ENCODE measurements at regions of chr15 and their contacts with region 1.

Region 1: DNA sequence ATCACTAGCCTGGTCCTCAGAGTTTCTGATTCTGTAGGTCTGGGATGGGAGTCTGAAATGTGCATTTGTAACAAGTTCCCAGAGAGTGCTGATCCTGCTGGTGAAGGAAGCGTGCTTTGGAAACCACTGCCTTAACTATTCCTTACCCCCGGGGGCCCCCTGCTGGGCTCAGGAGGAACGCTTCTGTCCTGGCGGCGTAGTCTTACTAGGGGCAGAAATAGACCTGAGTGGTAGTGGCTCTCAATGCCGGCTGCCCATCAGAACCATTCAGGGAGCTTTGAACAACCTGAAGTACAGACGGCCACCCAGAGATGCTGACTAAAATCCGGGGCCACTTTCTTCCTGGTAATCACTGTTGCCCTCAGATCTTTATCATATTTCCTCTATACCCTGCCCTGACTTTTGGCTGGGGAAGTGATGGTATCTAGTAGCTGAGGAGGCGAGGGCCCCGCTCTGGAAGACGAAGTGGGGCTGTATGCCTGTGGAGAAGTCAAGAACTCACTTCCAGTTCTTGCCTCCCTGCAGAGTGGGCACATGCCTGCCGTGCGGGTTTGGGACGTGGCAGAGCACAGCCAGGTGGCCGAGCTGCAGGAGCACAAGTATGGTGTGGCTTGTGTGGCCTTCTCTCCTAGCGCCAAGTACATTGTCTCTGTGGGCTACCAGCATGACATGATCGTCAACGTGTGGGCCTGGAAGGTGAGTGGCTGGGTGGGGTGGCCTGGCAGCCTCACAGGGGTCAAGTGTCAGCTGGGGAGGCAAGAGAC is 16.3 kb upstream of the JMJD7 start:
- DNase-seq: peak; percentile 80
- ATAC-seq: peak; percentile 89
- H3K4me3 Mint-ChIP-seq: no peak overlapping the region
- H3K27ac Mint-ChIP-seq: peak overlapping the region; percentile 69
- H3K4me1 Mint-ChIP-seq: peaks cover 34% of the 10 kb centered on the region
- H3K27me3 Mint-ChIP-seq: no peaks in the 10 kb centered on the region

Region 2: GRCh38 chr15:41557673-41558399 is 253.8 kb before region 1 on chr15:
- CTCF ChIA-PET with region 1: interaction called, 13 read pairs
- POLR2A ChIA-PET with region 1: no interaction called
- DNase-seq: peak; percentile 76
- ATAC-seq: peak; percentile 76
- H3K4me3 Mint-ChIP-seq: peak overlapping the region; percentile 74
- H3K27ac Mint-ChIP-seq: peak overlapping the region; percentile 65
- H3K4me1 Mint-ChIP-seq: peaks cover 22% of the 10 kb centered on the region
- H3K27me3 Mint-ChIP-seq: peaks cover 47% of the 10 kb centered on the region

Region 3: DNA sequence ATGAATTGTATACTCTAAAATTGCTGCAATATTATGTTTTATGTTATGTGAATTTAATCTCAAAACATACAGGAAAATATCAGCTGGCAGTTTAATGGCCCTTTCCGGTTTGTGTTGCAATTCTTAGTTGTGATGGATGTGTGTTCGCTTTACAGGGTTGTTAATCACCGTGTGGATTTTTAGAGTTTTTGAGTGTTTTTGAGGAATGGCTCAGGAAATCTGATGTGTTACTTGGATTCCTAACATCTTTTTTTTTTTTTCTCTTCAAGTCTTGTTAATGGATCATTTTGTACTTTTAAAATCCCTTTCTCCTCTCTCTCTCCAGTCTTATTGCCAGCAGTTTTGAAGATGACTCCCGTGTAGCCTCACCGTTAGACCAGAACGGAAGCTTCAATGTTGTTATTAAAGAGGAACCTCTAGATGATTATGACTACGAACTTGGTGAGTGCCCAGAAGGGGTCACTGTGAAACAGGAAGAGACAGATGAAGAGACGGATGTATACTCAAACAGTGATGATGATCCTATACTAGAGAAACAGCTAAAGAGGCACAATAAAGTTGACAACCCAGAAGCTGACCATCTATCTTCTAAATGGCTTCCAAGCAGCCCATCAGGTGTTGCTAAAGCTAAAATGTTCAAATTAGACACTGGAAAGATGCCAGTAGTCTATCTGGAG is 115.7 kb before region 1 on chr15:
- CTCF ChIA-PET with region 1: interaction called, 29 read pairs
- POLR2A ChIA-PET with region 1: no interaction called
- DNase-seq: peak; percentile 75
- ATAC-seq: peak; percentile 98
- H3K4me3 Mint-ChIP-seq: peak overlapping the region; percentile 4
- H3K27ac Mint-ChIP-seq: peak overlapping the region; percentile 74
- H3K4me1 Mint-ChIP-seq: peaks cover 38% of the 10 kb centered on the region
- H3K27me3 Mint-ChIP-seq: no peaks in the 10 kb centered on the region

Region 4: DNA sequence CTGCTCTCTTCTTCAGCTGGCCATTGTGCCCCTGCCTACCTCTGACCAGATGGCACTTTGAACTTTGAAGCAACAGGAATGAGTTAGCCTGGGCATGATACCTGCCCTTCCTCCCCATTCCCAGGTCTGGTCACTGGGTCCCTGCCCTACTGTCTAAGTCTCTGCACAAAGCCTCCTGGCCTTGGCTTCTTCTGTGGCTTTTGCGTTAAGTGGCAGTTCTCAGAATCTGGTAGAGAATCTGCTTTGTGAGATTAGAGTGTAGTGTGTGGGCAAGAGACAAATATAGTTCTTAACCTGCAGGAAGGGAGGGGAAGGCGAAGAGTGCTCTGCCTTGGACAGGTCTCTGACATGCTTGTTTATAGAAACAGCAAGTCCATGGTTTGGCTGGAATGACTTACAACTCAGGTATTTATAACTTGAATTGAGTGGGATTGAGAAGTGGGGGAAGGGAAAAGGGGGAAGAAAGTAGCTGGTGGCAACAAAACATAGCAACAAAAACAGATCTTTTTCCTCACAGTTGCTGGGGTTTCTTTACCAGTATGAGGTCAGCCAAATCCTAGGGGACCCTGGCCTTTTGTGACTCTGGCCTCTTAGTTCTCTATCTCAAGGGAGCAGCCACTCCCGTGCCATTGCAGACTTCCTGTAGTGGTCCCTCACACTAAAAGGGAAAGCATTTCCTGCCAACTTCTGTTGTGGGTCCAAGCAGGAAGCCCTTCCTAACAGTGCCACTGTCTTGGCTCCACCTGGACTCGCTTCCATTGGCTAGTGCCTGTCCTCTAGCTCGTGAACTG is 20.7 kb before region 1 on chr15:
- CTCF ChIA-PET with region 1: interaction called, 33 read pairs
- POLR2A ChIA-PET with region 1: no interaction called
- DNase-seq: peak; percentile 39
- ATAC-seq: peak; percentile 77
- H3K4me3 Mint-ChIP-seq: peak overlapping the region; percentile 62
- H3K27ac Mint-ChIP-seq: peak overlapping the region; percentile 83
- H3K4me1 Mint-ChIP-seq: peaks cover 54% of the 10 kb centered on the region
- H3K27me3 Mint-ChIP-seq: no peaks in the 10 kb centered on the region

Region 5: GRCh38 chr15:41904541-41905005 is 93.0 kb after region 1 on chr15:
- CTCF ChIA-PET with region 1: interaction called, 13 read pairs
- POLR2A ChIA-PET with region 1: no interaction called
- DNase-seq: peak; percentile 81
- ATAC-seq: peak; percentile 81
- H3K4me3 Mint-ChIP-seq: no peak overlapping the region
- H3K27ac Mint-ChIP-seq: peak overlapping the region; percentile 26
- H3K4me1 Mint-ChIP-seq: peaks cover 22% of the 10 kb centered on the region
- H3K27me3 Mint-ChIP-seq: no peaks in the 10 kb centered on the region

Region 6: DNA sequence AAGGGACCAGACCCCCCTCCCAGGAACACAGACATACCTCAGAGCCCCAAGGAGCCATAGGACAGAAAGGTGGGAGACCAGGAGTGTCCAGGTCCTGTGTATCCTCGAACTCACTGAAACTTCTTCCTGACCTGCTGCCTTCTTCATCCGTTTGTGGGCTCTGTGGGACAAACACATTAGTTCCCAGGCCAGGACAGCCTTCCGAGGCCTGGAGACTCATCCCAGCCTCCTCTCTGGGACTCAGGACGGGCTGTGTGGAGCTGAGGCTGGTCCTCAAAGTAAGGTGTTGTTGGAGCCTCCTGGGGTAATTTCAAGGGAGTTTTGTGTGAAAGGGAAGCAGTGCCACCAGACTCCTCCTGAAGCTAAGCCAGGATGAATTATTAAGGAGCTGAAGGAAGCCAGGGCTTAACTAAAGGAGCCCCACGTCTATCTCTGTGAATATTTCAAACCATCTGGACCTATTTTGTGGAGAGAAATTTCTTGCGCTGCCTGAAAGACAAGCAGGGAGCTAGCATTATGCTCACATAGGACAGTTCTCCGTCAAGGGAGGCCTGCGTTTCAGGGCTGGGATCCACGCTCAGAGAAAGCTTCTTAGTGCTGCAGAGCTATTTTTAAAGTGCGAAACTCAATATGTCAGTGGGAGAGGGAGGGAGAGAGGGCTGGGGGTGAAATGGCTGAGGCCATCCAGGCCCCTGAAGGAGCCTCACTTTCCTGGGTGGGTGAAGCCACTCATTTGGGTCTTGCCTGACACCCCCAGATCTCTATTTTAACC is 239.1 kb after region 1 on chr15:
- CTCF ChIA-PET with region 1: no interaction called
- POLR2A ChIA-PET with region 1: no interaction called
- DNase-seq: no peak
- ATAC-seq: no peak
- H3K4me3 Mint-ChIP-seq: no peak overlapping the region
- H3K27ac Mint-ChIP-seq: no peak overlapping the region
- H3K4me1 Mint-ChIP-seq: no peaks in the 10 kb centered on the region
- H3K27me3 Mint-ChIP-seq: peaks cover 19% of the 10 kb centered on the region